ENCODE measurements at regions of chrX and their contacts with region 1.

Region 1: DNA sequence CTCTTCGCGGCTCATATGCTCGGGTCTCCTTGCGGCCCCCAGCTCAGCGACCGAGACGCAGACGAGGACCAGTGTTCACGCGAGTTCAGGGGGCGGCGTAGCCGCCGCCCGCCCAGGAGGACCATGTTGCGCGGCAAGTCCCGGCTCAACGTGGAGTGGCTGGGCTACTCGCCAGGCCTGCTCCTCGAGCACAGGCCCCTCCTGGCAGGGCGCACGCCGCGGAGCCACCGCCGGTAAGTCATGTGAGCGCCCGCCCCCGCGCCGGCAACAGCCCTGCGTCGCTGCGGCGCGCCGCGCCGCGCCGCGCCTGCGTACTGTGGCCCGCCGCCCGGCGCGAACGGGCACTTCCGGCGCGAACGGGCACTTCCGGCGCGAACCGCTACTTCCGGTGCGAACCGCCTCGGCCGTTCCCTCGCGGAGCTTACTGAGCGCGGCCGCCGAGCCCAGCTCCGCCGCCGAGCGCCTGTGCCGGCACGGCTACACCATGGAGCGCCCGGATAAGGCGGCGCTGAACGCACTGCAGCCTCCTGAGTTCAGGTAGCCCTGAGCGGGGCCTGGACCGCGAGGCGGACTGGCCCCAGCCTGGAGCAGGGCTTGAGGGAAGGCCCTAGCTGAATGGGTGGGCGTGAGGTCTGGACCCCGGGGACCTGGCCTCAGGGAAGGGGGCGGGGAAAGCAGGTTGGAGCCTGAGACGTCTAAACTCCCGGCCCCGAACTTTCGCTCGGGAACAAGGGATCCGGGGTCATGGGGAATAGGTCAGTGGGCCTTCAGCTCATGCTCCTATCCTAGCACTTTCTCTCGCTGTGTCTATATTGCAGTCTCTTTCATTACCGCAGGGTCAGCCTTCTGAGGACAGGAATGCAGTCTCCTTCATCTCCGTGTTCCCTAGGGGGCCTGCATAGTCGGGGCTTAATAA is at the start of gene VMA21:
- DNase-seq: peak; percentile 90
- ATAC-seq: peak; percentile 89
- H3K4me3 ChIP-seq: peak within 1 kb of the TSS; percentile 48 to 82 (median 77)
- H3K4me3 Mint-ChIP-seq: peak within 1 kb of the TSS; percentile 90
- H3K27ac ChIP-seq: peak within 1 kb of the TSS; percentile 96 to 98
- H3K27ac Mint-ChIP-seq: peak within 1 kb of the TSS; percentile 96
- H3K4me1 ChIP-seq: peaks cover 5 to 22% of the 10 kb centered on the region in 2 donors
- H3K4me1 Mint-ChIP-seq: peaks cover 52% of the 10 kb centered on the region
- H3K27me3 ChIP-seq: no peaks in the 10 kb centered on the region
- H3K27me3 Mint-ChIP-seq: no peaks in the 10 kb centered on the region
- CTCF ChIP-seq: no peak
- total RNA-seq, gene VMA21: 22.6 and 22.7 TPM in 2 replicates

Region 2: DNA sequence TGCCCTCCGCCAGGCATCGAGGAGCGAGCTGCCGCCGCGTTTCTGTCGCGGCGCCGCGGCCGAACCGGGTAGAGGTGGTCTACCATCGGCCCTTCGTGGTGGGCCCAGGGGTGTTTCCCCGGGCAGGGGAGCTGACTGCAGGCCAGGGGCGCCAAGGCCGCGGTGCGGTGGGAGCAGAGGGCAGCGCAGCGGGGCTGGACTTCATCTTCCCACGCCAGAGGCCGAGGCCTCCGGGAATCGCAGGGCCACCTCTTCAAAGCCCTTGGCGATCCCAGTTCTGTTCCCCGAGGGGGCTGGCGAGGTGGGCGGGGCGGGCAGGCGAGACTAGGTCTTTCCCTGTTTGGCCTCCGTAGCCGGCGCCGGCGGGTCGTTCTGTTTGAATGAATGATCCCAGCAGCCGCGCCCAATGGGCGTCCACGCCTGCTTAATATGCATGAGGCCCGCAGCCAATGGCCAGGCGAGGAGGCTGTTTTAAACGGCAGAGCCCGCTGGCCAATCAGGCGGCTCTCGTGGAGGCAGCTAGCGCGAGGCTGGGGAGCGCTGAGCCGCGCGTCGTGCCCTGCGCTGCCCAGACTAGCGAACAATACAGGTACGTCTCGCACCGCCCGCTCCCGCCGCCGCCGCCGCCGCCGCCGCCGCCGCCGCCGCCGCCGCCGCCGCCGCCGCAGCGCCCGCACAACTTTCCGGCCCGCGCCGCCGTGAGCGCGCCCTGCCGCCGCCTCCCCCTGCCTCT is 414.1 kb before region 1 on chrX and contains the start of gene HMGB3:
- CTCF ChIA-PET with region 1: no interaction called
- POLR2A ChIA-PET with region 1: no interaction called
- intact Hi-C with region 1: loop called (anchors 10 kb)
- DNase-seq: peak; percentile 79
- ATAC-seq: peak; percentile 96
- H3K4me3 ChIP-seq: peak within 1 kb of the TSS; percentile 7 to 63 (median 49)
- H3K4me3 Mint-ChIP-seq: peak within 1 kb of the TSS; percentile 80
- H3K27ac ChIP-seq: no peak within 1 kb of the TSS
- H3K27ac Mint-ChIP-seq: no peak within 1 kb of the TSS
- H3K4me1 ChIP-seq: peaks cover 8 to 15% of the 10 kb centered on the region in 2 donors
- H3K4me1 Mint-ChIP-seq: peaks cover 8% of the 10 kb centered on the region
- H3K27me3 ChIP-seq: peaks cover 0 to 15% (median 5%) of the 10 kb centered on the region in 4 experiments
- H3K27me3 Mint-ChIP-seq: peaks cover 16% of the 10 kb centered on the region
- CTCF ChIP-seq: no peak
- total RNA-seq, gene HMGB3: 0.70 and 1.6 TPM in 2 replicates

Measured in B cell (primary cell).